Activated B cell treated with CpG ODN at 0.5 μM for 24 hours (primary cell): ENCODE measurements at regions of chr18 and their contacts with region 1.

Region 1: DNA sequence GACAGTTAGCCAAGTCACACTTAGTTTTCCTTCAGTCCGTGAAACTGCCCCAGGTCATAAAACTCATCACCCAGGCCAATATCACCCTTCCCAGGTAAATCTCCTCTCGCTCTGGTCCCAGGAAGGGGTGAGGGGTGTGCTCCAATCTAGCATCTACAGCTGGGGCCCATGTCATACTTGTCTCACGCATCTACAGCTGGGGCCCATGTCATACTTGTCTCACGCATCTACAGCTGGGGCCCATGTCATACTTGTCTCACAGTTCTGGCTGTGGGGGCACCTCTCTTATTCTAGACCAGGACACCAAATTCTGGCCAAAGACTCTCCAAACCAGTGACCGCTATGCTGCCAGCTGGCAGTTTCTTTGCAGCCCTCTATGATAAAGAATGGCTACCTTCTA is 123.3 kb upstream of the DLGAP1 start:
- DNase-seq: no peak
- ATAC-seq: no peak
- H3K4me3 Mint-ChIP-seq: no peak overlapping the region
- H3K27ac Mint-ChIP-seq: no peak overlapping the region
- H3K4me1 Mint-ChIP-seq: no peaks in the 10 kb centered on the region
- H3K27me3 Mint-ChIP-seq: no peaks in the 10 kb centered on the region
- CTCF ChIP-seq: no peak

Region 2: GRCh38 chr18:4631239-4631638 is 52.8 kb after region 1 on chr18:
- CTCF ChIA-PET with region 1: no interaction called
- POLR2A ChIA-PET with region 1: no interaction called
- intact Hi-C with region 1: loop called (anchors 5 kb)
- DNase-seq: no peak
- ATAC-seq: no peak
- H3K4me3 Mint-ChIP-seq: no peak overlapping the region
- H3K27ac Mint-ChIP-seq: no peak overlapping the region
- H3K4me1 Mint-ChIP-seq: no peaks in the 10 kb centered on the region
- H3K27me3 Mint-ChIP-seq: no peaks in the 10 kb centered on the region
- CTCF ChIP-seq: no peak